ENCODE measurements at regions of chr2 and their contacts with region 1.

Region 1: GRCh38 chr2:43467891-43468290 is 127.9 kb downstream of the THADA start:
- DNase-seq: no peak
- H3K4me3 ChIP-seq: no peak overlapping the region
- H3K27ac ChIP-seq: peak overlapping the region; percentile 51 to 76 (median 64)
- H3K4me1 ChIP-seq: peaks cover 0 to 63% (median 49%) of the 10 kb centered on the region in 4 donors
- H3K27me3 ChIP-seq: no peaks in the 10 kb centered on the region
- CTCF ChIP-seq: no peak
- EP300 ChIP-seq: no peak
- POLR2A ChIP-seq: no peak

Region 2: DNA sequence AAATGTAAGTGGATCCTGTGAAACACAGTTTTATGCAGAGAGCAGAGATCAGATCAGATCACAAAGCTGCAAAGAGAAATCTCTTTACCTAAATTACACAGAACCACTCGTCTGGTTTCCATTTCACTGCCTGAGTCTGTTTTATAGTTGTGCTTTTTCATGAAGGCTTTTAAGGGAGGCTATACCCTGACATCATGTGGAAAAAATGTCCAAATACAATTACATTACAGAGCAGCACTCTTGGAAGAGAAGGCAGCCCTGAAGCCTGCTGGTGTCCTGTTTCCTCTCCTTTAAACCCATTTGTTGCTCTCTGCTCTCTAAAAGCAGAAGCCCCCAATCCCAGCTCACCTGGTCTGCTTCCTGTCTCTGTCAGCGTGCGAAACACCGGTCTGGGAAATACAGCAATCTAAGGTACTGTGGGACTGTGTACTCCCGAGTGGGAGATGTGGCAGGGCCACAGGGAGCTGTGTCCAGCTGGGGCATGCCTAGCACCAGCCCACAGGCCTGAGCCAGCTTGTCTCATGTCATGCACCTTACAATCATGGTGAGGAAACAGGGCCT is 216.6 kb before region 1 on chr2:
- intact Hi-C with region 1: loop called (anchors 5 kb)
- DNase-seq: no peak
- H3K4me3 ChIP-seq: no peak overlapping the region
- H3K27ac ChIP-seq: peak overlapping the region; percentile 84 to 93 (median 88)
- H3K4me1 ChIP-seq: peaks cover 0 to 44% (median 31%) of the 10 kb centered on the region in 4 donors
- H3K27me3 ChIP-seq: no peaks in the 10 kb centered on the region
- CTCF ChIP-seq: no peak
- EP300 ChIP-seq: no peak
- POLR2A ChIP-seq: no peak

Region 3: DNA sequence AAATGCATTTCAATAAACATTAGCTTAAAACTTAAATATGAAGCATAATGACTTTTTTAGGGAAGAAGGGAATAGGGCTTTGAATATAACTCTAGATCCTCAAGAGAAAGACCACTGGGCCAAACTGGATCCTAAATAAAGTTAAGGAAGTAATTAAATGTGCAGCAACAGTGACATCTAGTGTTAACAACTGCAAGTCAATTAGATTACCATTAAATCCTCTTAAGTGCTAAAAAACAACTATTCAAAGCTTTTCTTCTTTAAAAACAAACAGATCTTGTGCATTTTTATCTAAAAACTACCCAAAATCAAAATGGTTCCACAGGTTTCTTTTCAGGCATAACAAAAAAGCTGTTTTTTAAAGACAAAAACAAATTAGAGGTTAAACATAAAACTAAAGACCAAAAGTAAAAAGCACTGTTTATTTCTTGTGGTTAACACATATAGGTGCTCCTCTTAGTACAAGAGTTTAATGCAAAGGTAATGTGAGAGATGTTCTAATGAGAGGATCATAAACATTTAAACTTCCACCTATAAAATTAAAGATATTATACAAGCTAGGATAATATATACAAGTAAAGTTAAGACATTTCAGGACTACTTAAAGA is 16.5 kb after region 1 on chr2:
- intact Hi-C with region 1: no loop called
- DNase-seq: no peak
- H3K4me3 ChIP-seq: no peak overlapping the region
- H3K27ac ChIP-seq: peak overlapping the region; percentile 68 to 80 (median 76)
- H3K4me1 ChIP-seq: peaks cover 0 to 41% (median 29%) of the 10 kb centered on the region in 4 donors
- H3K27me3 ChIP-seq: no peaks in the 10 kb centered on the region
- CTCF ChIP-seq: peak; percentile 43 to 75 (median 66)
- EP300 ChIP-seq: no peak
- POLR2A ChIP-seq: no peak

Measured in sigmoid colon (tissue), 7 donors.